CD4-positive, alpha-beta memory T cell (primary cell): ENCODE measurements at regions of chr5 and their contacts with region 1.

Region 1: GRCh38 chr5:5492087-5492933 is 69.8 kb downstream of the ICE1 start:
- DNase-seq: peak; percentile 56 to 67 (median 60)
- H3K4me3 ChIP-seq: no peak overlapping the region
- H3K4me3 Mint-ChIP-seq: peak overlapping the region in 7 of 8 donors; percentile 71 to 79 (median 75)
- H3K27ac ChIP-seq: no peak overlapping the region
- H3K27ac Mint-ChIP-seq: peak overlapping the region in 4 of 7 donors; percentile 61 to 93 (median 80)
- H3K4me1 ChIP-seq: peaks cover 19% of the 10 kb centered on the region
- H3K4me1 Mint-ChIP-seq: peaks cover 14 to 34% (median 25%) of the 10 kb centered on the region in 4 donors
- H3K27me3 ChIP-seq: no peaks in the 10 kb centered on the region
- H3K27me3 Mint-ChIP-seq: peaks cover 0 to 6% of the 10 kb centered on the region in 2 donors

Region 2: GRCh38 chr5:5421961-5422818 is 70.1 kb before region 1 on chr5 and contains the start of gene ICE1:
- CTCF ChIA-PET with region 1: interaction called, 5 read pairs
- POLR2A ChIA-PET with region 1: interaction called, 18 read pairs
- intact Hi-C with region 1: loop called (anchors 1 kb)
- DNase-seq: peak; percentile 97 to 98 (median 97)
- H3K4me3 ChIP-seq: peak within 1 kb of the TSS; percentile 85 to 90
- H3K4me3 Mint-ChIP-seq: peak within 1 kb of the TSS in 7 of 8 donors; percentile 92 to 97 (median 94)
- H3K27ac ChIP-seq: peak within 1 kb of the TSS; percentile 91
- H3K27ac Mint-ChIP-seq: peak within 1 kb of the TSS in 6 of 7 donors; percentile 98 to 99 (median 98)
- H3K4me1 ChIP-seq: peaks cover 53% of the 10 kb centered on the region
- H3K4me1 Mint-ChIP-seq: peaks cover 13 to 20% (median 16%) of the 10 kb centered on the region in 4 donors
- H3K27me3 ChIP-seq: no peaks in the 10 kb centered on the region
- H3K27me3 Mint-ChIP-seq: no peaks in the 10 kb centered on the region
- total RNA-seq, gene ICE1: 48.3 to 52.1 TPM

Region 3: GRCh38 chr5:6576861-6577501 is 1084.7 kb after region 1 on chr5:
- CTCF ChIA-PET with region 1: interaction called, 6 read pairs
- POLR2A ChIA-PET with region 1: no interaction called
- intact Hi-C with region 1: loop called (anchors 2 kb)
- DNase-seq: peak in 1 of 5 donors; percentile 12
- H3K4me3 ChIP-seq: no peak overlapping the region
- H3K4me3 Mint-ChIP-seq: no peak overlapping the region
- H3K27ac ChIP-seq: no peak overlapping the region
- H3K27ac Mint-ChIP-seq: no peak overlapping the region
- H3K4me1 ChIP-seq: no peaks in the 10 kb centered on the region
- H3K4me1 Mint-ChIP-seq: no peaks in the 10 kb centered on the region
- H3K27me3 ChIP-seq: peaks cover 8% of the 10 kb centered on the region
- H3K27me3 Mint-ChIP-seq: peaks cover 27 to 29% of the 10 kb centered on the region in 2 donors

Region 4: DNA sequence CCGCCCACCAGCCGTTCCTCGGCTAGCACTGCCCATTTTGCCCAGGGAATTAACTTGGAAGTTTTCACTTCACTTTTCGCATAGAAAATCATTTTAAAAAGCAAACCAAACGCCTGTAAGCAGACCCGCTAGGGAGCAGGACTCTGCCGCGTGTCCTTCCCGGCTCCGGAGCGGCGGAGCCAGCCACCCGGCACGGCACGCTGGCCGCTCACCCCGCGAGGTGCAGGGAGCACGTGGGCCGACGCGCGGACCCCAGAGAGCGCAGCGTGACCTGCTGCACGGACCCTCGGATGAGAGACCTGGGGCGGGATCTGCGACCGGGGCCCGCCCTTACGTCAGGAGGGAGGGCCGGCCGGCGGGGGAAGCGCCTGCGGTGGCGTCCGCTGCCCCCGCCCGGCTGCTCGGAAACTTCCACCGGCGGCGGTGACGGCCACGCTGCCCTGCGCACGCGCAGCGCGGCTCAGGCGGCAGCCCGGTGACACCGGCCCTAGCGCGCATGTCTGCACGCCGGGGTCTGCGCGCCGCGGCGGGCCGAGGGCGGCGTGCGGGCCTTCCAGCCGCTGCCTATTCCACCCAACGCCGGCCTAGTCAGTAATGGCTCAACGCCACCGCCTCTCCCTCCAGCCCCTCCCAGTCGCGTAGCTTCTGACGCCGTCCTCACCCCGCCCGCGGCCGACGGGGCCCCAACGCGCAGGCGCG is 1220.4 kb after region 1 on chr5:
- CTCF ChIA-PET with region 1: no interaction called
- POLR2A ChIA-PET with region 1: no interaction called
- intact Hi-C with region 1: loop called (anchors 10 kb)
- DNase-seq: peak; percentile 96 to 99 (median 99)
- H3K4me3 ChIP-seq: peak overlapping the region; percentile 70 to 81
- H3K4me3 Mint-ChIP-seq: peak overlapping the region; percentile 88 to 91 (median 90)
- H3K27ac ChIP-seq: peak overlapping the region; percentile 86
- H3K27ac Mint-ChIP-seq: peak overlapping the region; percentile 92 to 95 (median 94)
- H3K4me1 ChIP-seq: peaks cover 31% of the 10 kb centered on the region
- H3K4me1 Mint-ChIP-seq: peaks cover 26 to 39% (median 33%) of the 10 kb centered on the region in 4 donors
- H3K27me3 ChIP-seq: no peaks in the 10 kb centered on the region
- H3K27me3 Mint-ChIP-seq: no peaks in the 10 kb centered on the region